CD4-positive, alpha-beta T cell (primary cell): ENCODE measurements at regions of chr10 and their contacts with region 1.

Region 1: DNA sequence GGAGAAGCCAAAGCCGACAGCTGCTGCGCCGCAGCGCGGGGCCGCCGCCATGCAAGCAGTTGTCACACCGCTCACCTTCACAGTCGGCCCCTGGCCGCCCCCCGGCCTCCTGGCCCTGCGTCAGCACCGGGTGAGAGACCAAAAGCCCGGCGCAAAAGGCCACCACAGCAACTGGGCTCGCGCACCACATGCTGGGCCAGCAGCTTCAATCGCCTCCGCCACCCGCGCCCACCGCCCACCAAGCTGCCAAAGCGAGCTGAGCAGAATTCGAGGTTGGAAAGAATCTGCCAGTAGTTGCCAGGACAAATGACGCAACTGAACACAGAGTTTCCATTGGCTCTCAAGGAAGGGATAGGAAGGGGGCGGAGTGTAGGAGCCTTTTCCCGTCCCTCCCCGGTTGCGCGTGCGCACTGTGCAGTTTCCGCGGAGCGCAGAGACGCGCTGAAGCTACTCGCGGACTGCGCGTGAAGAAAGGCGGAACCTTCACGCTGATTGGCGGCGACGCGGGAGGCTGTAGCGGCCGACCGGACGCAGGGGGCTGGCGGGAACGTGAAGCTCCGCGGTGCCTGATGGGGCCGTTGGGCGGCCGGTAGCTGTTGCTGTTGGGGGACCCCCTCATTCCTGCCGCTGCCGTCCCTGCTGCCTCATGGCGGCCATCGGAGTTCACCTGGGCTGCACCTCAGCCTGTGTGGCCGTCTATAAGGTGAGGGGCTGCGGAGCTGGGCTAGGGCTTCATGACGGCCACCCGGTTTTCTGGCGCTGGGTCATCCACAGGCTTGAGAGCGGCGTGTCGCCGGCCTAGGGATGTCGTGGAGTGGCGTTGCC is at the starts of genes CDNF, HSPA14 and MSANTD7:
- DNase-seq: peak; percentile 97 to 100 (median 99)
- ATAC-seq: peak; percentile 93
- H3K4me3 ChIP-seq: peak within 1 kb of the TSS; percentile 97
- H3K4me3 Mint-ChIP-seq: peak within 1 kb of the TSS; percentile 99
- H3K27ac ChIP-seq: peak within 1 kb of the TSS; percentile 84 to 88
- H3K27ac Mint-ChIP-seq: peak within 1 kb of the TSS; percentile 90
- H3K4me1 ChIP-seq: peaks cover 21% of the 10 kb centered on the region
- H3K4me1 Mint-ChIP-seq: peaks cover 32% of the 10 kb centered on the region
- H3K27me3 ChIP-seq: no peaks in the 10 kb centered on the region
- H3K27me3 Mint-ChIP-seq: no peaks in the 10 kb centered on the region
- CTCF ChIP-seq: no peak
- total RNA-seq, gene CDNF: 3.2 to 3.7 TPM
- total RNA-seq, gene HSPA14: 29.1 to 33.4 TPM
- total RNA-seq, gene MSANTD7: 26.2 to 26.9 TPM

Region 2: DNA sequence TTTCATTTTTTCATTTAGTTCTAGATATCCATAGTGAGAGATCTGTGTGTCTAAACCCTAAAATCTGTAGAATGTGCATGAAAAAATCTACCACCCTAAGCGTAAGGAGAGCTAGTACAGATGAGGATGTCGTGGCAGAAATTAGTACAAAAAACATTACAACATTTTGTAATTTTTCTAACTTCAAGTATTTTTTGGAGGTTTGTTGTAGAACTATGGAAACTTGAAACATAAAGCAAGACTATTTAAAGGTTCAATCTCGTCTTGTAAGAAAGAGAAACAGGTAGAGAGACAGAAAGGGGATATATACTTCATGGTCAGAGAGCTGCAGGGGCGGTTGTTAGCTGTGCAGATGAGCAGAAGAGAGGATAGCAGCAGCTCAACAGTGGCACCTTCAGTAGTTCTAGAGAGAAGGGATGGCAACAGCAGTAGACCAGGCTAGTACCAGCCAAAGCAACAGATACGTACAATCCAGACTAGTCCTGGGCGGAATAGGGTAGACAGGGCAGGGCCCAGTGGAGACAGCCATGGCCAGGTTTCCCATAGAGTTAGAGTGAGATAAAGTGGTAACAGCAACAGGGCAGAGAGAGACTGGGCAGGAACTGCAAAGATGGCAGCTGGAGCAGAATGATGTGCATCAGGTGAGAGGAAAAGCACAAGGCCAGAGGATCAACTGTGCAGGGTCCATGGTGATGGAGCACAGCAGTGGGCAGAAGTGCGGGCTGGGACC is 652.5 kb before region 1 on chr10:
- CTCF ChIA-PET with region 1: no interaction called
- POLR2A ChIA-PET with region 1: interaction called, 9 read pairs
- intact Hi-C with region 1: loop called in 1 of 2 experiments (anchors 10 kb)
- DNase-seq: peak in 12 of 14 experiments; percentile 10 to 89 (median 26)
- ATAC-seq: peak; percentile 68
- H3K4me3 ChIP-seq: peak overlapping the region; percentile 46
- H3K4me3 Mint-ChIP-seq: peak overlapping the region; percentile 77
- H3K27ac ChIP-seq: peak overlapping the region; percentile 52 to 85
- H3K27ac Mint-ChIP-seq: peak overlapping the region; percentile 91
- H3K4me1 ChIP-seq: peaks cover 26% of the 10 kb centered on the region
- H3K4me1 Mint-ChIP-seq: peaks cover 20% of the 10 kb centered on the region
- H3K27me3 ChIP-seq: peaks cover 19 to 26% of the 10 kb centered on the region in 2 experiments
- H3K27me3 Mint-ChIP-seq: peaks cover 28% of the 10 kb centered on the region
- CTCF ChIP-seq: no peak

Region 3: DNA sequence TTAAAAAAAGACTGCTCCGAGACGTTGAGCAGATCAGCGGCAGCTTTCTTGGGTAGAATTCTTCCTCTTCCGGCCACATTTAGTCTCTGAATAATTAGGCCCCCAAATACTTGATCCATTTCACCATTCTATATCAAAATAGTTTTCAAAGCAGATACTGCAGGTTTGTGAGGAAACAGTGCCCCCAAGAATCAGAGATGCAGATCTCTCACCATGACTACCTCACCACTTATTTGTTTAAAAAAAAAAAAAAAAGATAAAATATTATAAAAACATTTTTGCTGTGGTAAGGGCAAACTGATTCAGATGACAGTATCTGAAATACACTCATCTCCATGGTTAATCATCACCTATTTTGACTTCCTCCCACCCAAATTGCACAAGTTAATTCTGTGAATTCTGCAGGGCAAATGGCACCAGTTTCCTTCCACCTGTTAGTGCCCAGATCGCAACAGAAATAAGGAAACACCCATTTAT is 273.7 kb before region 1 on chr10:
- CTCF ChIA-PET with region 1: interaction called, 3 read pairs
- POLR2A ChIA-PET with region 1: interaction called, 37 read pairs
- intact Hi-C with region 1: no loop called
- DNase-seq: peak in 4 of 14 experiments; percentile 56 to 85 (median 78)
- ATAC-seq: peak; percentile 57
- H3K4me3 ChIP-seq: peak overlapping the region; percentile 32
- H3K4me3 Mint-ChIP-seq: peak overlapping the region; percentile 87
- H3K27ac ChIP-seq: peak overlapping the region; percentile 80 to 82
- H3K27ac Mint-ChIP-seq: peak overlapping the region; percentile 98
- H3K4me1 ChIP-seq: peaks cover 83% of the 10 kb centered on the region
- H3K4me1 Mint-ChIP-seq: peaks cover 97% of the 10 kb centered on the region
- H3K27me3 ChIP-seq: no peaks in the 10 kb centered on the region
- H3K27me3 Mint-ChIP-seq: no peaks in the 10 kb centered on the region
- CTCF ChIP-seq: no peak

Region 4: GRCh38 chr10:14588084-14588937 is 249.7 kb before region 1 on chr10:
- CTCF ChIA-PET with region 1: no interaction called
- POLR2A ChIA-PET with region 1: interaction called, 17 read pairs
- intact Hi-C with region 1: no loop called
- DNase-seq: peak in 5 of 14 experiments; percentile 44 to 84 (median 67)
- ATAC-seq: peak; percentile 33
- H3K4me3 ChIP-seq: peak overlapping the region; percentile 17
- H3K4me3 Mint-ChIP-seq: peak overlapping the region; percentile 87
- H3K27ac ChIP-seq: peak overlapping the region; percentile 90 to 95
- H3K27ac Mint-ChIP-seq: peak overlapping the region; percentile 97
- H3K4me1 ChIP-seq: peaks cover 82% of the 10 kb centered on the region
- H3K4me1 Mint-ChIP-seq: peaks cover 95% of the 10 kb centered on the region
- H3K27me3 ChIP-seq: no peaks in the 10 kb centered on the region
- H3K27me3 Mint-ChIP-seq: no peaks in the 10 kb centered on the region
- CTCF ChIP-seq: no peak

Region 5: GRCh38 chr10:14751014-14751896 is 86.7 kb before region 1 on chr10:
- CTCF ChIA-PET with region 1: no interaction called
- POLR2A ChIA-PET with region 1: no interaction called
- intact Hi-C with region 1: no loop called
- DNase-seq: no peak
- ATAC-seq: no peak
- H3K4me3 ChIP-seq: no peak overlapping the region
- H3K4me3 Mint-ChIP-seq: no peak overlapping the region
- H3K27ac ChIP-seq: no peak overlapping the region
- H3K27ac Mint-ChIP-seq: no peak overlapping the region
- H3K4me1 ChIP-seq: no peaks in the 10 kb centered on the region
- H3K4me1 Mint-ChIP-seq: no peaks in the 10 kb centered on the region
- H3K27me3 ChIP-seq: no peaks in the 10 kb centered on the region
- H3K27me3 Mint-ChIP-seq: no peaks in the 10 kb centered on the region
- CTCF ChIP-seq: no peak

Region 6: GRCh38 chr10:14822879-14823755 is 14.9 kb before region 1 on chr10:
- CTCF ChIA-PET with region 1: interaction called, 3 read pairs
- POLR2A ChIA-PET with region 1: interaction called, 16 read pairs
- intact Hi-C with region 1: no loop called
- DNase-seq: peak in 13 of 14 experiments; percentile 15 to 67 (median 37)
- ATAC-seq: peak; percentile 56
- H3K4me3 ChIP-seq: no peak overlapping the region
- H3K4me3 Mint-ChIP-seq: no peak overlapping the region
- H3K27ac ChIP-seq: no peak overlapping the region
- H3K27ac Mint-ChIP-seq: no peak overlapping the region
- H3K4me1 ChIP-seq: no peaks in the 10 kb centered on the region
- H3K4me1 Mint-ChIP-seq: peaks cover 4% of the 10 kb centered on the region
- H3K27me3 ChIP-seq: no peaks in the 10 kb centered on the region
- H3K27me3 Mint-ChIP-seq: no peaks in the 10 kb centered on the region
- CTCF ChIP-seq: peak; percentile 76

Region 7: GRCh38 chr10:14926722-14927416 is 88.9 kb after region 1 on chr10:
- CTCF ChIA-PET with region 1: no interaction called
- POLR2A ChIA-PET with region 1: no interaction called
- intact Hi-C with region 1: no loop called
- DNase-seq: no peak
- ATAC-seq: no peak
- H3K4me3 ChIP-seq: no peak overlapping the region
- H3K4me3 Mint-ChIP-seq: no peak overlapping the region
- H3K27ac ChIP-seq: no peak overlapping the region
- H3K27ac Mint-ChIP-seq: no peak overlapping the region
- H3K4me1 ChIP-seq: no peaks in the 10 kb centered on the region
- H3K4me1 Mint-ChIP-seq: no peaks in the 10 kb centered on the region
- H3K27me3 ChIP-seq: no peaks in the 10 kb centered on the region
- H3K27me3 Mint-ChIP-seq: no peaks in the 10 kb centered on the region
- CTCF ChIP-seq: no peak

Region 8: GRCh38 chr10:14959276-14960057 is 121.5 kb after region 1 on chr10 and contains the start of gene MEIG1:
- CTCF ChIA-PET with region 1: no interaction called
- POLR2A ChIA-PET with region 1: interaction called, 13 read pairs
- intact Hi-C with region 1: loop called (anchors 2 to 5 kb)
- DNase-seq: peak; percentile 83 to 96 (median 88)
- ATAC-seq: peak; percentile 85
- H3K4me3 ChIP-seq: peak within 1 kb of the TSS; percentile 83
- H3K4me3 Mint-ChIP-seq: peak within 1 kb of the TSS; percentile 98
- H3K27ac ChIP-seq: peak within 1 kb of the TSS; percentile 86 to 92
- H3K27ac Mint-ChIP-seq: peak within 1 kb of the TSS; percentile 98
- H3K4me1 ChIP-seq: peaks cover 30% of the 10 kb centered on the region
- H3K4me1 Mint-ChIP-seq: peaks cover 34% of the 10 kb centered on the region
- H3K27me3 ChIP-seq: no peaks in the 10 kb centered on the region
- H3K27me3 Mint-ChIP-seq: no peaks in the 10 kb centered on the region
- CTCF ChIP-seq: no peak
- total RNA-seq, gene MEIG1: not detected